ENCODE measurements at regions of chr3 and their contacts with region 1.

Region 1: GRCh38 chr3:196412704-196413103 is 19.5 kb downstream of the UBXN7 start:
- DNase-seq: no peak
- ATAC-seq: no peak
- H3K4me3 ChIP-seq: no peak overlapping the region
- H3K27ac ChIP-seq: no peak overlapping the region
- H3K4me1 ChIP-seq: no peaks in the 10 kb centered on the region
- H3K27me3 ChIP-seq: no peaks in the 10 kb centered on the region
- CTCF ChIP-seq: no peak

Region 2: GRCh38 chr3:196093317-196094111 is 319.2 kb before region 1 on chr3:
- CTCF ChIA-PET with region 1: no interaction called
- POLR2A ChIA-PET with region 1: interaction called, 16 read pairs
- in situ Hi-C with region 1: no loop called
- intact Hi-C with region 1: no loop called
- DNase-seq: no peak
- ATAC-seq: no peak
- H3K4me3 ChIP-seq: no peak overlapping the region
- H3K27ac ChIP-seq: no peak overlapping the region
- H3K4me1 ChIP-seq: no peaks in the 10 kb centered on the region
- H3K27me3 ChIP-seq: no peaks in the 10 kb centered on the region
- CTCF ChIP-seq: no peak

Region 3: DNA sequence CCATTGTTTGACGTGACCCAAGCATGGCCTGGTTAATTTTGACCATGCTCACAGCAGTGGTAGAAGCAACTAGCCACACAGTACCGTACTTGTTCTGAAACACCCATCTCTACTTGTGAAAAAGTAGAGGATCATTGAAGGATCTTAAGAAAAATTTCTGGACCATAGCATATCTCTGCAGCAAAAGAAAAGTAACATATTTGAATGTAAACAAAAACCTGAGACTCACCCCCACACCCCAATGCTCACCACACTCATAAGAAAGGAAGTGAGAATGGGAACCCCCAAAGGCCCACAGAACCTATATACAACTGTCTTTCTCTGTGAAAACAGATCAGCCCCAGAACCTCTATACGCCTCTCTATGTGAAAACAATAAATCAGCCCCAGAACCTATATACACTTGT is 297.0 kb before region 1 on chr3:
- CTCF ChIA-PET with region 1: no interaction called
- POLR2A ChIA-PET with region 1: no interaction called
- in situ Hi-C with region 1: no loop called
- intact Hi-C with region 1: no loop called
- DNase-seq: no peak
- ATAC-seq: no peak
- H3K4me3 ChIP-seq: no peak overlapping the region
- H3K27ac ChIP-seq: no peak overlapping the region
- H3K4me1 ChIP-seq: no peaks in the 10 kb centered on the region
- H3K27me3 ChIP-seq: no peaks in the 10 kb centered on the region
- CTCF ChIP-seq: no peak

Region 4: GRCh38 chr3:196357905-196358304 is 54.8 kb before region 1 on chr3:
- CTCF ChIA-PET with region 1: interaction called, 14 read pairs
- POLR2A ChIA-PET with region 1: no interaction called
- in situ Hi-C with region 1: no loop called
- intact Hi-C with region 1: no loop called
- DNase-seq: no peak
- ATAC-seq: no peak
- H3K4me3 ChIP-seq: no peak overlapping the region
- H3K27ac ChIP-seq: no peak overlapping the region
- H3K4me1 ChIP-seq: no peaks in the 10 kb centered on the region
- H3K27me3 ChIP-seq: no peaks in the 10 kb centered on the region
- CTCF ChIP-seq: no peak

Region 5: GRCh38 chr3:196378146-196378841 is 34.4 kb before region 1 on chr3:
- CTCF ChIA-PET with region 1: no interaction called
- POLR2A ChIA-PET with region 1: interaction called, 13 read pairs
- in situ Hi-C with region 1: no loop called
- intact Hi-C with region 1: no loop called
- DNase-seq: no peak
- ATAC-seq: no peak
- H3K4me3 ChIP-seq: no peak overlapping the region
- H3K27ac ChIP-seq: no peak overlapping the region
- H3K4me1 ChIP-seq: no peaks in the 10 kb centered on the region
- H3K27me3 ChIP-seq: no peaks in the 10 kb centered on the region
- CTCF ChIP-seq: no peak

Region 6: DNA sequence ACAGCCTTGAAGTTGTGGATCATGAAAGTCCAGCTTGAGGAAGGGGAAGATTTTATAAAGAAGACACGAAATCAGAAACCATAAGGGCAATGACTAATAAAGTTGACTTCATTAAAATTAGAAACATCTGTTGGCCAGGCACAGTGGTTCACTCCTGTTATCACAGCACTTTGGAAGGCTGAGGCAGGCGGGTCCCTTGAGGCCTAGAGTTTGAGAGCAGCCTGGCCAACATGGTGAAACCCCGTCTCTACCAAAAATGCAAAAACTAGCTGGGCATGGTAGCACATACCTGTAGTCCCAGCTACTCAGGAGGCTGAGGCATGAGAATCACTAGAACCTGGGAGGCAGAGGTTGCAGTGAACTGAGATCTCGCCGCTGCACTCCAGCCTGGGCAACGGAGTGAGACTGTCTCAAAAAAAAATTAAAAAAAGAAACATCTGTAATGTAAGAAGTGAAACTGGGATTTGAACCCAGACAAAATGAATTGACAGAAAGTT is 27.4 kb after region 1 on chr3:
- CTCF ChIA-PET with region 1: interaction called, 10 read pairs
- POLR2A ChIA-PET with region 1: no interaction called
- in situ Hi-C with region 1: no loop called
- intact Hi-C with region 1: no loop called
- DNase-seq: no peak
- ATAC-seq: no peak
- H3K4me3 ChIP-seq: no peak overlapping the region
- H3K27ac ChIP-seq: no peak overlapping the region
- H3K4me1 ChIP-seq: no peaks in the 10 kb centered on the region
- H3K27me3 ChIP-seq: no peaks in the 10 kb centered on the region
- CTCF ChIP-seq: no peak